ENCODE measurements at regions of chr9 and their contacts with region 1.

Region 1: GRCh38 chr9:88578121-88579054 is 43.4 kb downstream of the NXNL2 start:
- DNase-seq: peak; percentile 39
- ATAC-seq: peak; percentile 96
- H3K4me3 ChIP-seq: no peak overlapping the region
- H3K27ac ChIP-seq: no peak overlapping the region
- H3K4me1 ChIP-seq: no peaks in the 10 kb centered on the region
- H3K27me3 ChIP-seq: peaks cover 2 to 17% of the 10 kb centered on the region in 2 experiments; a peak in 2 of 5 replicates
- CTCF ChIP-seq: peak; percentile 92
- EP300 ChIP-seq: no peak
- POLR2A ChIP-seq: no peak
- RAD21 ChIP-seq: peak; percentile 90

Region 2: DNA sequence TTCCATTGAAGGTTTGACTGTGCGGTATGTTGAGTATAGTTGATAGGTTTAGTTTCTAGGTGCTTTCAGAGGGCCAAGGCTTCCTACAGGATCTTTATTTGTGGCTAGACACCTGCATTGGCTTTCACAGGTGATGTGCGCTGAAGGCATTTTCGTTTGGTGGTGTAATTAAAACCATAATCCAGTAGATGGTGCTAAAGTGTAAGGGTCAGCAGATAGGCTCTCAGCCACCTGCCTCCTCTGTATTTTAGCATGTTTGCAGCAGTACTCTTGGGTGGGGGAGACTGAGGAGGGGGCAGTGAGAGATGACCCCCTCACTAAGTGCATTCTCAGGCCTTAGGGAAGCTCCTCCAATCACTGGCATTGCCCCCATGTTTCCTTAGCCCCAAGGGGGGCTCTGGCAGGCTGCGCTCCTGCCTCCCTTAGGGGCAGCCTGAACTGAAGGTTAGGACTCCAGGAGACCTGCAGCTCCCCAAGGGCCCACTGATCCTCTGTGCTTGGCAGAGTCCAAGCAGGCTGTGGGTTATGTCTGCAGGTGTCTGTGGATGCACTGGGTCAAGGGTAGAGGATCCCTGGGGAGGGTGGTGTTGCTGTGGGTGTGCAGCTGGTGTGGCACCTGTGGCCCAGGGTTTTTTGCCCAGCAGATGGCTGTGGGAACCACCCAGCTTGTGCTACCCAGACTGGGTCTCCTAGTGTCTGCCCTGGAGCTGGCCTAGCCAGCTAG is 627.5 kb before region 1 on chr9:
- CTCF ChIA-PET with region 1: interaction called, 14 read pairs
- POLR2A ChIA-PET with region 1: no interaction called
- in situ Hi-C with region 1: loop called (anchors 10 kb)
- intact Hi-C with region 1: loop called (anchors 5 kb)
- DNase-seq: peak; percentile 22
- ATAC-seq: peak; percentile 70
- H3K4me3 ChIP-seq: no peak overlapping the region
- H3K27ac ChIP-seq: no peak overlapping the region
- H3K4me1 ChIP-seq: no peaks in the 10 kb centered on the region
- H3K27me3 ChIP-seq: no peaks in the 10 kb centered on the region
- CTCF ChIP-seq: peak; percentile 81
- EP300 ChIP-seq: no peak
- POLR2A ChIP-seq: no peak
- RAD21 ChIP-seq: peak; percentile 62; the same call in 1 of the 2 replicates

Region 3: DNA sequence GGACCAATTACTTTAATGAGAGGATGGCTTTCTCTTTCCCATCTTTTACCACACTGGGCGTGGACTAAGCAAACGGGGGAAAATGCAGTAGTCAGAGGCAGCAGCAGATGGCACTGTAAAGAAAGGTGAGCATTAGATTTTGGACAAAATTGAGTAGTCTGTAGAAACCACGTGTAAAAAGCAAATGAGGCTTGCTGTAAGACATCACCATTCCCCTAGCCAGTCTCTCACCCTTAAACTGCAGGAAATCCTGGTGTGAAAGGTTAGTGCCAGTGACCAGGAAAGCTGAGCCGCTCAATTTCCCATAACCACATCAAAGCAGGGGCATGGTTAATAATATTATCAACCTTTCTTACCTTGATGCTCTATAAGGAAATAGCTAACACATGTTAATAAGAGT is 471.9 kb before region 1 on chr9:
- CTCF ChIA-PET with region 1: no interaction called
- POLR2A ChIA-PET with region 1: no interaction called
- in situ Hi-C with region 1: no loop called
- intact Hi-C with region 1: loop called (anchors 10 kb)
- DNase-seq: no peak
- ATAC-seq: peak; percentile 61
- H3K4me3 ChIP-seq: no peak overlapping the region
- H3K27ac ChIP-seq: no peak overlapping the region
- H3K4me1 ChIP-seq: no peaks in the 10 kb centered on the region
- H3K27me3 ChIP-seq: no peaks in the 10 kb centered on the region
- CTCF ChIP-seq: peak; percentile 51
- EP300 ChIP-seq: no peak
- POLR2A ChIP-seq: no peak
- RAD21 ChIP-seq: no peak

Region 4: GRCh38 chr9:88173378-88173999 is 404.9 kb before region 1 on chr9:
- CTCF ChIA-PET with region 1: interaction called, 26 read pairs
- POLR2A ChIA-PET with region 1: no interaction called
- in situ Hi-C with region 1: loop called (anchors 10 kb)
- intact Hi-C with region 1: loop called (anchors 2 kb)
- DNase-seq: peak; percentile 80
- ATAC-seq: peak; percentile 71
- H3K4me3 ChIP-seq: no peak overlapping the region
- H3K27ac ChIP-seq: no peak overlapping the region
- H3K4me1 ChIP-seq: no peaks in the 10 kb centered on the region
- H3K27me3 ChIP-seq: no peaks in the 10 kb centered on the region
- CTCF ChIP-seq: peak; percentile 65
- EP300 ChIP-seq: no peak
- POLR2A ChIP-seq: no peak
- RAD21 ChIP-seq: peak; percentile 44

Region 5: GRCh38 chr9:88310310-88310995 is 267.9 kb before region 1 on chr9:
- CTCF ChIA-PET with region 1: interaction called, 5 read pairs
- POLR2A ChIA-PET with region 1: no interaction called
- in situ Hi-C with region 1: loop called (anchors 10 kb)
- intact Hi-C with region 1: no loop called
- DNase-seq: peak; percentile 14
- ATAC-seq: no peak
- H3K4me3 ChIP-seq: no peak overlapping the region
- H3K27ac ChIP-seq: no peak overlapping the region
- H3K4me1 ChIP-seq: no peaks in the 10 kb centered on the region
- H3K27me3 ChIP-seq: peaks cover 0 to 10% of the 10 kb centered on the region in 2 experiments; a peak in 1 of 5 replicates
- CTCF ChIP-seq: 0 out of 2 replicates have a peak, but pooled peaks have one; percentile 22
- EP300 ChIP-seq: no peak
- POLR2A ChIP-seq: no peak
- RAD21 ChIP-seq: no peak